PC-9 (cell line): ENCODE measurements at regions of chr12 and their contacts with region 1.

Region 1: DNA sequence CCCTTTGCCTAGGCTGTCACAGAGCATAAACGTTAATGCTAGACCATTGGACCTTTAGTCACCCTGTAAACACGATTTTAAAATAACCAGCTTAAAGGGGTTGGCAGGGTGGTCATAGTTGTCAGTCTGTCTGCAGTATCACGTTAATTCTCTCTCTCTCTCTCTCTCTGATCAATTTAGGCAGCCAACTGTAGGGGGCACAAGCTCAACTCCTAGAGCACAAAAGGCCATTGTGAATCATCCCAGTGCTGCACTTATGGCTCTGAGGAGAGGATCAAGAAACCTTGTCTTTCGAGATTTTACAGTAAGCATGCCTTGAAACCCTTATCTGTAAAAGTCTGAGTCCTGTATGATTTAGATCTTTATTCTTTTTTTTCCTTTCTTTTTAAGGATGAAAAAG is 97.1 kb downstream of the SCAF11 start:
- DNase-seq: no peak
- H3K4me3 ChIP-seq: no peak overlapping the region
- H3K27ac ChIP-seq: no peak overlapping the region
- H3K4me1 ChIP-seq: no peaks in the 10 kb centered on the region
- H3K27me3 ChIP-seq: no peaks in the 10 kb centered on the region
- CTCF ChIP-seq: no peak

Region 2: GRCh38 chr12:45483571-45483970 is 409.7 kb before region 1 on chr12:
- CTCF ChIA-PET with region 1: no interaction called
- POLR2A ChIA-PET with region 1: no interaction called
- intact Hi-C with region 1: no loop called
- DNase-seq: no peak
- H3K4me3 ChIP-seq: no peak overlapping the region
- H3K27ac ChIP-seq: no peak overlapping the region
- H3K4me1 ChIP-seq: no peaks in the 10 kb centered on the region
- H3K27me3 ChIP-seq: no peaks in the 10 kb centered on the region
- CTCF ChIP-seq: no peak

Region 3: GRCh38 chr12:45828402-45828801 is 64.8 kb before region 1 on chr12:
- CTCF ChIA-PET with region 1: no interaction called
- POLR2A ChIA-PET with region 1: interaction called, 14 read pairs
- intact Hi-C with region 1: no loop called
- DNase-seq: no peak
- H3K4me3 ChIP-seq: no peak overlapping the region
- H3K27ac ChIP-seq: no peak overlapping the region
- H3K4me1 ChIP-seq: no peaks in the 10 kb centered on the region
- H3K27me3 ChIP-seq: no peaks in the 10 kb centered on the region
- CTCF ChIP-seq: no peak

Region 4: DNA sequence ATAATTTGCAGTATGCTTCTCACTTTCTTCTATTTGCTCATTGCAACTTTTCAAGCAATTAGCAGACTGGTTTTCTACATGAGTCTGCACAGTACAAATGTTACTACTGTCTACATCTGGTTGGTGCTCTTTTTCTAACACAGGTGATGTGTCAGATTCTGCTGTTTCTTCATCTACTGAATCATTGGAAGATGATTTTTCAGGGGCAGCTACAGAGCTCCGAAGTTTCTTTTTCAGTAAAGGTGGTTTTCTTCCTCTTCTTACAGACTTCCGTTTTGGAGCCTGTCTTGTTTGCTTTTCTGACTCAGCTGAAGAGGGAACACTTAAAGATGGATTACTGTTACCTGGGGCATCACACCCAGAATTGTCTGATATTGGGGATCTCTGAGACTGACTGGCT is 35.1 kb after region 1 on chr12:
- CTCF ChIA-PET with region 1: no interaction called
- POLR2A ChIA-PET with region 1: interaction called, 19 read pairs
- intact Hi-C with region 1: no loop called
- DNase-seq: no peak
- H3K4me3 ChIP-seq: no peak overlapping the region
- H3K27ac ChIP-seq: no peak overlapping the region
- H3K4me1 ChIP-seq: no peaks in the 10 kb centered on the region
- H3K27me3 ChIP-seq: no peaks in the 10 kb centered on the region
- CTCF ChIP-seq: no peak

Region 5: DNA sequence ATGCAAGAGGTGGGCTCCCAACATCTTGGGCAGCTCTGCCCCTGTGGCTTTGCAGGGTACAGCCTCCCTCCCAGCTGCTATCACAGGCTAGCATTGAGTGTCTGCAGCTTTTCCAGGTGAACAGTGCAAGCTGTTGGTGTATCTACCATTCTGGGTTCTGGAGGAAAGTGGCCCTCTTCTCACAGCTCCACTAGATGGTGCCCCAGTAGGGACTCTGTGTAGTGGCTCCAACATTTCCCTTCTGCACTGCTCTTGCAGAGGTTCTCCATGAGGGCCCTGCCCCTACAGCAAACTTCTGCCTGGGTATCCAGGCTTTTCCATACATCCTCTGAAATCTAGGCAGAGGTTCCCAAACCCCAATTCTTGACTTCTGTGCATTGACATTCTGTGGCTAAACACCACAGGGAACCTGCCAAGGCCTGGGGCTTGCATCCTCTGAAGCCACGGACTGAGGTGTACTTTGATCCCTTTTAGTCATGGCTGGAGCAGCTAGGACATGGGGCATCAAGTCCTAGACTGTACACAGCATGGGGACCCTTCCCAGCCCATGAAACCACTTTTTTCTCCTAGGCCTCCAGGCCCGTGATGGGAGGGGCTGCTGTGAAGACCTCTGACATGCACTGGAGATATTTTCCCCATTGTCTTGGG is 399.6 kb after region 1 on chr12:
- CTCF ChIA-PET with region 1: no interaction called
- POLR2A ChIA-PET with region 1: no interaction called
- intact Hi-C with region 1: no loop called
- DNase-seq: no peak
- H3K4me3 ChIP-seq: no peak overlapping the region
- H3K27ac ChIP-seq: no peak overlapping the region
- H3K4me1 ChIP-seq: no peaks in the 10 kb centered on the region
- H3K27me3 ChIP-seq: no peaks in the 10 kb centered on the region
- CTCF ChIP-seq: 0 out of 2 replicates have a peak, but pooled peaks have one; percentile 15